GM10248 (cell line): ENCODE measurements at regions of chr17 and their contacts with region 1.

Region 1: GRCh38 chr17:67475236-67475937 is 98.3 kb downstream of the PITPNC1 start:
- DNase-seq: peak; percentile 76
- CTCF ChIP-seq: peak; percentile 95

Region 2: DNA sequence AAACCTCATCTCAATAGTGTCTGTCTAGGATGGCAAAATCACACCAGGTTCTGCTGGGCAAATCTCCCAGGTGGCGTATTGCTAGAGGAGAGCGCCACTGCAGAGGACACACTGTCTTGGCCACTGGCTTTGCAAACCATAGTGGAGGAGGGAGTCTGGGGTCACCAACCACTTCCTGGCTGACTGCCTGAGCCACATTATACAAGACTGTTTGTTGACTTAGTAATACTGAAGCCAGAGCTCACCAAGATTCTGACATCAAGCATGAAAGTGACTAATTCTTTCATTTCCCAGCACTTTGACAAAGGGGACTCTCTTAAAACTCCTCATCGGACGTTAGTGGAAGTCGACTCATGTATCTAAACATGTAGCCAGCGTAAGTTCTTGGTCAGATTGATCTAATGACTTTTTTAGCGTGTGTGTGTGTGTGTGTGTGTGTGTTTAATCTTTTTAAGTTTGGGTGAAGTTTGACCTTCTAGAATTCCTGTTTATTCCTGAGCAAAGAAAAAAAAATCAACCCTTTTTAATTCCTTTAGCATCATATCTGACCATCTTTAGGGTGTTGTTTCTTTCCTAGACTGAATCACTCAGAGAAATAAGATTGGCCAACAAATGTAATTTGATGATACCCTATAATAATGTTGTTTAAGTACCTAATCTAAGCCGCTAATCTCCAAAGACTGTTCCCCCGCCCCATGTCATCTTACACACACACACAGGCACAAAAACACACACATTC is 84.6 kb before region 1 on chr17:
- CTCF ChIA-PET with region 1: interaction called, 27 read pairs
- POLR2A ChIA-PET with region 1: no interaction called
- DNase-seq: peak; percentile 76
- CTCF ChIP-seq: no peak

Region 3: GRCh38 chr17:67441052-67441927 is 34.1 kb before region 1 on chr17:
- CTCF ChIA-PET with region 1: interaction called, 19 read pairs
- POLR2A ChIA-PET with region 1: no interaction called
- DNase-seq: peak; percentile 31
- CTCF ChIP-seq: no peak

Region 4: DNA sequence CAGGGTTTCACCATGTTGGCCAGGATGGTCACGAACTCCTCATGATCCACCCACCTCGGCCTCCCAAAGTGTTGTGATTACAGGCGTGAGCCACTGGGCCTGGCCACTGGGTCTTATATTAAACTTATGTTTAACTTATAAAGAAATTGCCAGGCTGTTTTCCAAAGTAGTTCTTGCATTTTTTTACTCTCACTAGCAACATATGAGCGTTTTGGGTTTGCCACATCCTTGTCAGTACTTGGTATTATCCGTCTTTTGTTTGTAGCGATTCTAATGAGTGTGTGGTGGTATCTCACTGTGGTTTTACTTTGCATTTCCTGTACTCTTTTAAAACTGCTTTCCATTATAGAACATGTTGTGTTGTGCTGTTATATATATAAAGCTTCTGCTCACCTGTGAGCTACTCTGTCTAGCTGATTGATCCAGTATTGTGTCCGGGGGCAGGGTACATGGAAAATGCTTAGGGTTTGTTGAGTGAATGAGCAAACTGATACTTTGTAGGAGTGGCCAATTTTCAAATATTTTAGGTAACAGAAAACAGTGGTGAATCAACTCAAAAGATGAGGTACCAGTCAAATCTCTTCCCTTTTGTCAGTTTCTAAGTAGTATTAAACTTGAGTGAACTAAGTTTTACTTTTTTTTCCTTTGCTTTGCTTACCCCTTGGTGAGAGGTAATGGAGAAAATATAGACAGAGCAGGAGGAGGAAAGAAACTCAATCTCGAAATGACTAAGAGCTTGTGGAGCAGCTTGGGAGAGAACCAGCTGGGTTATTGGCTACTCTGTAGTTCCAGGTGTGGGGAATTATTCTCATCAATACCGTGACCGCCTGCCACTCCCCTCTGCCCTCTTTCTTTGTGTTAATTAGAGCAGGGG is 22.5 kb before region 1 on chr17:
- CTCF ChIA-PET with region 1: interaction called, 32 read pairs
- POLR2A ChIA-PET with region 1: no interaction called
- DNase-seq: peak; percentile 34
- CTCF ChIP-seq: no peak

Region 5: GRCh38 chr17:67461228-67461780 is 14.1 kb before region 1 on chr17:
- CTCF ChIA-PET with region 1: interaction called, 33 read pairs
- POLR2A ChIA-PET with region 1: no interaction called
- DNase-seq: no peak
- CTCF ChIP-seq: no peak

Region 6: DNA sequence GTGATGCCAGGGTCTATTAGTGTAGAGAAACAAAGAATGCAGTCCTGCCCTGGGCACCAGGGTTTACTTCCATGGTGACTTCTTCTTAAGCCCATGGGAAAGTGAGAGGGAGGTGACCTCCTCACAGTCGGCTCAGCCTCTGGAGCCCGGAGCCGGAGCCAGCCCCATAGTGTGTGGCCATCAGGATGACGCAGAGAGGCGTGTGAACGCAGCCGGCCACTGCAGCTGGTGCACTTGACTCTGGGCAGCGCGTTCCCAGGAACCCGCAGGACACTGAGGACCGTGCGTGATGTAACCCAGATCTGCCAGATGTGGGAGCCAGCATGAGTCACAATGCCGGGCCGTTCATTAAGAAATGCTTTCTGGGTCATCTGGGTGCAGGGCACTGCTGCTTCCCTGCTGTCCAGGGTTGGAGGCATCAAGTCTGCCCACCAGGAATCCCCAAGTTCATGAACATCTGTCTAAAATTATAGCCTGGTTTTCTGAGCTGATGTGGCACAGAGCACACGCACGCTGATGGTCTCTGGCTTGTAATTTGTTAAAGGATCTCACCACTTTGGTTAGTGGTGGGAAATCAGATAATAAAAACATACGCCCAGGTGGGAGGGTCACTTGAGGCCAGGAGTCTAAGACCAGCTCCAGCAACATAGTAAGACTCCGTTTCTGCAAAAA is 15.8 kb after region 1 on chr17:
- CTCF ChIA-PET with region 1: interaction called, 18 read pairs
- POLR2A ChIA-PET with region 1: interaction called, 3 read pairs
- DNase-seq: no peak
- CTCF ChIP-seq: no peak

Region 7: GRCh38 chr17:67594115-67594880 is 118.9 kb after region 1 on chr17:
- CTCF ChIA-PET with region 1: interaction called, 10 read pairs
- POLR2A ChIA-PET with region 1: no interaction called
- DNase-seq: peak; percentile 48
- CTCF ChIP-seq: no peak

Region 8: DNA sequence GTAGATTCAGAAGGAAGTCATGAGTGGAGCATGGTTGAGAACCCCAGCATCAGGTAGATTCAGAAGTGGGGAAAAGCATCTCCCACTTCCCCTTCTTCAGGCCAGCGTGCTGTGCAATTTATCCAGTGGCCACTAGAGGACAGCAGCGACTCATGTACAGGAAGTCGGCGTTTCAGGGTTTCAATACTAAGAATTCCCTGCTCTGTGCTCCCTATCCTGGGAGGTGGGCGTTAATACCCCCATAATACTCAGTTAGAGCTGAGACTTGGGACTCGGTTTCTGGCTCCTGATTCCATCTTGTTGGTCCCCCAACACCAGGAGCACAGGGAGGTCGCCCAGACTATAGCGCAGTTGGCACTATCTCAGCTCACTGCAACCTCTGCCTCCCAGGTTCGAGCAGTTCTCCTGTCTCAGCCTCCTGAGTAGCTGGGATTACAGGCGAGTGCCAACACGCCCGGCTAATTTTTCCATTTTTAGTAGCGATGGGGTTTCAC is 697.1 kb after region 1 on chr17:
- CTCF ChIA-PET with region 1: no interaction called
- POLR2A ChIA-PET with region 1: no interaction called
- DNase-seq: peak; percentile 34
- CTCF ChIP-seq: peak; percentile 96